Motor neuron (in vitro differentiated cells): ENCODE measurements at regions of chr12 and their contacts with region 1.

Region 1: DNA sequence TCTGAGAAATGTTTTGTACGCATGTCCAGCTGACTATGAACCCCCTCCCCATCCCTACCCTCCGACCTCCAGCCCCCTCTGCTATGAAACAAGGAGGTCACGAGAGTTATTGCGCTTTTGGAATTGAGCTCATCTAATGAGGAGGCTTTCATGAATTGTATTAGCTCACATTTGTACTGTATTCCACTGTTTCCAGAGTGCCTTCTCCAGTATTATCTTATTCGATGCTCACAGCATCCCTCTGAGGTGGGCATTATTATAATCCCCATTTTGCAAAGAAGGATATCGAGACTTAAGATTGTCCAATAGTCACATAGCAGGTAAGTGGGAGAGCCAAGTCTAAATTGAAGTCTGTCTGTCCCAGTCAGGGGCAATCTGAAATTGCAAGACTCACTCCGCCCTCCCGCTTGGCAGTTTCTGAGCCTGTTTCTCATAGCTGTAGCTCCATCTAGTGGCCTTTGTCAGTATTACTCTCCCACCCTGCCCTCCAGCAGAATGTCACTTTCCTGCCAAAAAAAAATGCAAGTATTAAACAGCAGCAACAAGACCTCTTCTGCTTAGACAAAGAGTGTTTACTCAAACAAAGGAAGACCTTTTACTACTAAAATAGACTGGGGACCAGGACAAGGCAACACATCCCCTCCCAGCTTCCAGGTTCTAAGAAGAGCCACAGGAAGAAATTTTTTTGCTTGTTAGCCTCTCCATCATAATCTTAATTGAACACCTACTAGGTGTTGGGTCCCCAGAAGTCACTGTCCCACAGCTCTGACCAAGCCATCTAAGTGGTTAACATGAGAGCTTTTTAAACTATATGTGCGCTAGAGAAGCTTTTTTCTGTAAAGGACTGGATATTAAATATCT is 48.6 kb upstream of the TMEM233 start:
- ATAC-seq: peak; percentile 63 to 87 (median 80)
- H3K4me3 ChIP-seq: no peak overlapping the region
- H3K27ac ChIP-seq: no peak overlapping the region
- H3K4me1 ChIP-seq: peaks cover 0 to 5% of the 10 kb centered on the region in 2 donors

Region 2: GRCh38 chr12:118979763-118980406 is 565.1 kb before region 1 on chr12:
- in situ Hi-C with region 1: loop called in 1 of 9 experiments (anchors 25 kb)
- ATAC-seq: peak; percentile 7 to 75 (median 18)
- H3K4me3 ChIP-seq: peak overlapping the region; percentile 56 to 91 (median 71)
- H3K27ac ChIP-seq: peak overlapping the region; percentile 82 to 88
- H3K4me1 ChIP-seq: no peaks in the 10 kb centered on the region

Region 3: DNA sequence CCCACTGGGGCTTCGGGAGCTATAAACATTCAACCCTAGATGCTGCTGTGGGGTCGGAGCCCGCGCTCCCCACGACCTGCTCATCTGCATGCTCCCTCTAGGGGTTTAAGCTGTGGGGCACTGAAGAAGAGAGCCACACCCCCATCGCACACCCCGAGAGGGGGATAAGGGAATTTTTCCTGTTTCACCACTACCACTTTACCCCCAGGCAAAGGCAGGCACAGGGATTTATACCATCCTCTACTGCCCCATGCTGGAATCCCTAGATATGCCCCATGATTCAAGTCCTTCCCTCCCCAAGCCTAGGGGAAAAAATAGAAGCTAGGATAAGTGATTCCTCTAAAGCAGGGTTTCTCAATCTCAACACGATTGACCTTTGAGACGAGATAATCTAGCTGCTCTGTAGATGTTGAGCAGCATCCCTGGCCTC is 270.3 kb before region 1 on chr12:
- in situ Hi-C with region 1: no loop called
- ATAC-seq: no peak
- H3K4me3 ChIP-seq: no peak overlapping the region
- H3K27ac ChIP-seq: no peak overlapping the region
- H3K4me1 ChIP-seq: no peaks in the 10 kb centered on the region

Region 4: GRCh38 chr12:119444456-119445044 is 100.4 kb before region 1 on chr12:
- in situ Hi-C with region 1: loop called in 1 of 9 experiments (anchors 10 kb)
- ATAC-seq: peak in 7 of 8 experiments; percentile 33 to 91 (median 47)
- H3K4me3 ChIP-seq: no peak overlapping the region
- H3K27ac ChIP-seq: no peak overlapping the region
- H3K4me1 ChIP-seq: peaks cover 24 to 30% of the 10 kb centered on the region in 2 donors